Posterior vena cava (tissue), 2 donors: ENCODE measurements at regions of chr14 and their contacts with region 1.

Region 1: GRCh38 chr14:91985521-91986255 is 38.2 kb upstream of the FBLN5 start:
- DNase-seq: no peak

Region 2: GRCh38 chr14:90256354-90257131 is 1729.1 kb before region 1 on chr14 and contains the start of gene PSMC1:
- intact Hi-C with region 1: no loop called
- DNase-seq: peak; percentile 96
- total RNA-seq, gene PSMC1: 87.2 to 90.8 TPM

Region 3: DNA sequence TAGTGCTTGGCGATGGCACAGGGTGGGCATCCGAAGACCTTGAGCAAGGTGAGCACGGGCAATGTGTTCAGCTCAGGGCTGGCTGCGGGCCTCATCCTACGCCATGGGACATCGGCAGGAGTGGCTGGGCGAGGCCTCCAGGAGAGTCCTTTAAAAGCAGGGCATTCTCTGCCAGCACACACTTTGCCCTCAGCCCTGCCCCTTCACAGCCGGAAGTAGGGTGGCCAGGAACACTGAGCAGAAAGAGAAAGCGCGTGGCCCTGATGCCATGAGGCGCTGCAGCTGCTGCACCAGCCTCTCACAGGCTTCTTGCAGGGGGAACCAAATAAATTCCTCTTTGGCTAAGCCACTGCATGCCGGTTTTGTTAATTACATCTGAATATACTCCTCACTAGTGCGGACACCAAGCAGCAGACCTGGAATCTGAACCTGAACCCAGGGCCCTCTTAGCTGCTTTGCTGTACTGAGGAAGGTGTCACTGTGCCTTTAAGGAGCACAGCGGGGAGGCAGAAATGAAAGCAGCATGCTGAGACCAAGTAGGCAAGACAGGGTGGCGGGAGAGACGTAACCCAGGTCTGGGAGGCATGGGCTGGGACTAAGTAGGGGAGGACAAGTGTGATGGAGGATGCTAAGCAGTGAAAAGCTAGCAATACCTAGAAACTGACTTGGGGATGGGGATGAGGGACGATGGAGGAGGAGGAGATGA is 1324.7 kb before region 1 on chr14:
- intact Hi-C with region 1: loop called in 1 of 2 experiments (anchors 5 kb)
- DNase-seq: no peak